B cell (primary cell): ENCODE measurements at regions of chr4 and their contacts with region 1.

Region 1: GRCh38 chr4:76213415-76214176 is at the start of gene SCARB2:
- DNase-seq: peak; percentile 91
- ATAC-seq: peak; percentile 79
- H3K4me3 ChIP-seq: peak within 1 kb of the TSS; percentile 54 to 87 (median 71)
- H3K4me3 Mint-ChIP-seq: peak within 1 kb of the TSS; percentile 89
- H3K27ac ChIP-seq: peak within 1 kb of the TSS; percentile 85 to 86
- H3K27ac Mint-ChIP-seq: peak within 1 kb of the TSS; percentile 96
- H3K4me1 ChIP-seq: peaks cover 47 to 49% of the 10 kb centered on the region in 2 donors
- H3K4me1 Mint-ChIP-seq: peaks cover 47% of the 10 kb centered on the region
- H3K27me3 ChIP-seq: no peaks in the 10 kb centered on the region
- H3K27me3 Mint-ChIP-seq: no peaks in the 10 kb centered on the region
- CTCF ChIP-seq: no peak
- total RNA-seq, gene SCARB2: 30.3 and 31.5 TPM in 2 replicates

Region 2: GRCh38 chr4:76148142-76148865 is 65.3 kb before region 1 on chr4 and contains the start of gene NUP54:
- CTCF ChIA-PET with region 1: no interaction called
- POLR2A ChIA-PET with region 1: interaction called, 5 read pairs
- intact Hi-C with region 1: loop called (anchors 1 kb)
- DNase-seq: peak; percentile 95
- ATAC-seq: peak; percentile 98
- H3K4me3 ChIP-seq: peak within 1 kb of the TSS; percentile 71 to 98 (median 97)
- H3K4me3 Mint-ChIP-seq: peak within 1 kb of the TSS; percentile 98
- H3K27ac ChIP-seq: peak within 1 kb of the TSS; percentile 77 to 91
- H3K27ac Mint-ChIP-seq: peak within 1 kb of the TSS; percentile 89
- H3K4me1 ChIP-seq: peaks cover 22 to 28% of the 10 kb centered on the region in 2 donors
- H3K4me1 Mint-ChIP-seq: peaks cover 35% of the 10 kb centered on the region
- H3K27me3 ChIP-seq: no peaks in the 10 kb centered on the region
- H3K27me3 Mint-ChIP-seq: no peaks in the 10 kb centered on the region
- CTCF ChIP-seq: no peak
- total RNA-seq, gene NUP54: 71.0 and 71.4 TPM in 2 replicates

Region 3: DNA sequence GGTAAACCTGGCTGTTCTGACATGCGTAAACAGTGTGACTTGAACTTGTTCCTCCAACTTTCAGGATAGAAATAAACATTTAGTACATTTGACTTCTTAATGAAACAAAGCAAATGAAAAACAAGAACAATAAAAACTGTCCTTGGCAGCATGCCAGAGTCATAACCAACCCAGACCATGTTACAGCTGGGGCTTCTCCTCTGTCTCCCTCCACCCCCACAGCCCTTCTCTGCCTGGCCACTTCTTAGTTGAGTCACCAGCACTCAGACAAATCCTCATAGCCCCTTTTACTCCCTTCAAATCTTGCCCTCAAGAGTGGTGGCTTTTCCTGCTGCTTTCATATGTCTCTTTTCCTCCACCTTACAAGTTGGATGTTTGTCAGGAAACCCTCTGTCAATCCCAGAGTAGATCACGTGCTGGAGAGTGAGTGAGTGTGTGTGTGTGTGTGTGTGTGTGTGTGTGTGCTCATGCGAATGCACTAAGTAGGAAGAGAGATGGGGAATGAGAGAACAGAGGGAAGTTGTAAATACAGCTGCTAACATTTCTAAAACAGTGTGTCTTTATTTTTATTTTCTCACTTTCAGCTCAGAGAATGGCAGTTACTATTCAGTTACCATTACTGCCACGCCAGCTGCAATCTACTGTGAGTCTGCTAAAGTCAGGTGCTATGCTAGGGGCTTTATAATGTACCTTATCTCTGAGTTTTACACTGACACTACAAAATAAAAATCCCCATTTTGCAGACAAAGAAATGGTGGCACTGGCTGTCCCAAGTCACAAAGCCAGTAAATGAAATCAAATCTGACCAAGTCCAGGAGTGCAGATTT is 15.0 kb before region 1 on chr4:
- CTCF ChIA-PET with region 1: interaction called, 13 read pairs
- POLR2A ChIA-PET with region 1: interaction called, 4 read pairs
- intact Hi-C with region 1: loop called (anchors 1 kb)
- DNase-seq: peak; percentile 56
- ATAC-seq: peak; percentile 32
- H3K4me3 ChIP-seq: no peak overlapping the region
- H3K4me3 Mint-ChIP-seq: peak overlapping the region; percentile 36
- H3K27ac ChIP-seq: peak overlapping the region; percentile 30 to 42
- H3K27ac Mint-ChIP-seq: peak overlapping the region; percentile 64
- H3K4me1 ChIP-seq: peaks cover 50 to 54% of the 10 kb centered on the region in 2 donors
- H3K4me1 Mint-ChIP-seq: peaks cover 53% of the 10 kb centered on the region
- H3K27me3 ChIP-seq: no peaks in the 10 kb centered on the region
- H3K27me3 Mint-ChIP-seq: no peaks in the 10 kb centered on the region
- CTCF ChIP-seq: no peak